ENCODE measurements at regions of chr16 and their contacts with region 1.

Region 1: DNA sequence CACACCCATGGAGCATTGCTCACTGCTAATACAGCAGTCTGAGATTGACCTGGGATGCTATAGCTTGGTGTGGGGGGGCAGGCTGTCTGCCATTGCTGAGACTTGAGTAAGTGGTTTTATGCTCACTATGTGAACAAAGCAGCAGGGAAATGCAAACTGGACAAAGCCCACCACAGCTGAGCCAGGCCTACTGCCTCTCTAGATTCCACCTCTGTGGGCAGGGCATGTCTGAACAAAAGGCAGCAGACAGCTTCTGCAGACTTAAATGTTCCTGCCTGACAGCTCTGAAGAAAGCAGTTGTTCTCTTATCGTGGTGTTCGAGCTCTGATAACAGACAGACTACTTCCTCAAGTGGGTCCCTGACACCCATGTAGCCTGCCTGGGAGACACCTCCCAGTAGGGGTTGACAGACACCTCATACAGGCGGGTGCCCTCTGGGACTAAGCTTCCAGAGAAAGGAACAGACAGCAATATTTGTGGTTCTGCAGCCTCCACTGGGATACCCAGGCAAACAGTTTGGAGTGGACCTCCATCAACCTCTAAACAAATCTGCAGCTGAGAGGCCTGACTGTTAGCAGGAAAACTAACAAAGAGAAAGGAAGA is 2204.8 kb downstream of the TP53TG3F start:
- DNase-seq: peak in 1 of 2 donors; percentile 79
- H3K4me3 ChIP-seq: no peak overlapping the region
- H3K27ac ChIP-seq: no peak overlapping the region
- H3K4me1 ChIP-seq: no peaks in the 10 kb centered on the region
- H3K27me3 ChIP-seq: no peaks in the 10 kb centered on the region
- CTCF ChIP-seq: no peak
- POLR2A ChIP-seq: no peak

Region 2: GRCh38 chr16:35733971-35734702 is 69.9 kb after region 1 on chr16:
- intact Hi-C with region 1: loop called (anchors 2 kb)
- DNase-seq: peak; percentile 62 to 82
- H3K4me3 ChIP-seq: no peak overlapping the region
- H3K27ac ChIP-seq: no peak overlapping the region
- H3K4me1 ChIP-seq: no peaks in the 10 kb centered on the region
- H3K27me3 ChIP-seq: no peaks in the 10 kb centered on the region
- CTCF ChIP-seq: no peak
- POLR2A ChIP-seq: no peak